ENCODE measurements at regions of chr22 and their contacts with region 1.

Region 1: GRCh38 chr22:32660292-32660691 is 141.2 kb upstream of the TIMP3 start:
- DNase-seq: peak; percentile 73 to 74
- H3K4me3 ChIP-seq: no peak overlapping the region
- H3K27ac ChIP-seq: no peak overlapping the region
- H3K4me1 ChIP-seq: peaks cover 0 to 7% of the 10 kb centered on the region in 2 donors
- H3K27me3 ChIP-seq: no peaks in the 10 kb centered on the region
- CTCF ChIP-seq: peak in 5 of 6 experiments; percentile 65 to 85 (median 76)
- POLR2A ChIP-seq: no peak

Region 2: DNA sequence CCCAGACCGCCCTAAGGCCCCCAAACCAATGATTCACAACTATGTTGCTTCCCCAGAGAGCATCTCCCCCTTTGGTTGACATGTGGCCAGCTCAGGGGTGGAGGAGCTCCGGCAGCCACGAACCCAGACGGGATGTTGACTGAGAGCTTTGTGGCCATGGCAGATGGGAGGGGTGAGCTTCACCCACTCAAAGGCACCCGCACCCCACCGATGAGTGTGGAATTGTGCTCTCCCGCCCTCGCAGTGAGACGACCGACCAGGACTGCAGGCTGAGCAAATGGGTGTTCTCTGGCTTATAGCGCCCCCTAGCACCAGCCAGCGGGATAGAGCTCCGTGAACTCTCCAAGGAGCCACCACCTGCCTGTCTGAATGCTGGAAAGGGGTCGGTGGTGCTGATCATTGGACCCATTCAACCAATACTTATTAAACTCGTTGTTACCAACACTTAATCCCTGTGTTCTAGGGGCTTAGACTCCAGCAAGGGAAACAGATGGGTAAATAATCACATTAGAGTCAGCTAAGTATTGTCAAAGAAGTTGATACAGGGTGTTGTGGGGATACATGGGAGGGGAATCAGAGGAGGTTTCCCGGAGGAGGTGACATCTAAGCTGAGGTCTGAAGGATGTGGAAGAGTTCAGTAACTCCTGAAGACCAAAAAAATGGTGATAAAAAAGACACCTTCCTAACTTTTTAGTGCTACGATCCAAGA is 136.7 kb after region 1 on chr22:
- intact Hi-C with region 1: loop called (anchors 5 kb)
- DNase-seq: peak; percentile 66 to 70
- H3K4me3 ChIP-seq: no peak overlapping the region
- H3K27ac ChIP-seq: no peak overlapping the region
- H3K4me1 ChIP-seq: peaks cover 6 to 16% of the 10 kb centered on the region in 2 donors
- H3K27me3 ChIP-seq: no peaks in the 10 kb centered on the region
- CTCF ChIP-seq: peak; percentile 69 to 92 (median 83)
- POLR2A ChIP-seq: no peak

Region 3: GRCh38 chr22:33000342-33001280 is 340.3 kb after region 1 on chr22:
- intact Hi-C with region 1: loop called (anchors 5 kb)
- DNase-seq: peak; percentile 48 to 56
- H3K4me3 ChIP-seq: no peak overlapping the region
- H3K27ac ChIP-seq: no peak overlapping the region
- H3K4me1 ChIP-seq: peaks cover 0 to 4% of the 10 kb centered on the region in 2 donors
- H3K27me3 ChIP-seq: no peaks in the 10 kb centered on the region
- CTCF ChIP-seq: peak; percentile 71 to 90 (median 78)
- POLR2A ChIP-seq: no peak